ENCODE measurements at regions of chr5 and their contacts with region 1.

Region 1: GRCh38 chr5:154754460-154755360 is 467 bp upstream of the LARP1 start:
- DNase-seq: peak; percentile 100
- H3K4me3 ChIP-seq: peak overlapping the region; percentile 68
- H3K4me3 Mint-ChIP-seq: peak overlapping the region; percentile 85
- H3K27ac Mint-ChIP-seq: peak overlapping the region; percentile 90
- H3K4me1 ChIP-seq: peaks cover 18% of the 10 kb centered on the region
- H3K4me1 Mint-ChIP-seq: peaks cover 22% of the 10 kb centered on the region
- H3K27me3 ChIP-seq: no peaks in the 10 kb centered on the region
- H3K27me3 Mint-ChIP-seq: no peaks in the 10 kb centered on the region
- CTCF ChIP-seq: peak; percentile 42 to 62

Region 2: GRCh38 chr5:154647114-154647760 is 107.5 kb before region 1 on chr5:
- CTCF ChIA-PET with region 1: no interaction called
- POLR2A ChIA-PET with region 1: no interaction called
- intact Hi-C with region 1: loop called (anchors 1 kb)
- DNase-seq: peak; percentile 87 to 92
- H3K4me3 ChIP-seq: peak overlapping the region; percentile 15
- H3K4me3 Mint-ChIP-seq: peak overlapping the region; percentile 67
- H3K27ac Mint-ChIP-seq: peak overlapping the region; percentile 88
- H3K4me1 ChIP-seq: peaks cover 27% of the 10 kb centered on the region
- H3K4me1 Mint-ChIP-seq: peaks cover 17% of the 10 kb centered on the region
- H3K27me3 ChIP-seq: no peaks in the 10 kb centered on the region
- H3K27me3 Mint-ChIP-seq: no peaks in the 10 kb centered on the region
- CTCF ChIP-seq: no peak

Region 3: DNA sequence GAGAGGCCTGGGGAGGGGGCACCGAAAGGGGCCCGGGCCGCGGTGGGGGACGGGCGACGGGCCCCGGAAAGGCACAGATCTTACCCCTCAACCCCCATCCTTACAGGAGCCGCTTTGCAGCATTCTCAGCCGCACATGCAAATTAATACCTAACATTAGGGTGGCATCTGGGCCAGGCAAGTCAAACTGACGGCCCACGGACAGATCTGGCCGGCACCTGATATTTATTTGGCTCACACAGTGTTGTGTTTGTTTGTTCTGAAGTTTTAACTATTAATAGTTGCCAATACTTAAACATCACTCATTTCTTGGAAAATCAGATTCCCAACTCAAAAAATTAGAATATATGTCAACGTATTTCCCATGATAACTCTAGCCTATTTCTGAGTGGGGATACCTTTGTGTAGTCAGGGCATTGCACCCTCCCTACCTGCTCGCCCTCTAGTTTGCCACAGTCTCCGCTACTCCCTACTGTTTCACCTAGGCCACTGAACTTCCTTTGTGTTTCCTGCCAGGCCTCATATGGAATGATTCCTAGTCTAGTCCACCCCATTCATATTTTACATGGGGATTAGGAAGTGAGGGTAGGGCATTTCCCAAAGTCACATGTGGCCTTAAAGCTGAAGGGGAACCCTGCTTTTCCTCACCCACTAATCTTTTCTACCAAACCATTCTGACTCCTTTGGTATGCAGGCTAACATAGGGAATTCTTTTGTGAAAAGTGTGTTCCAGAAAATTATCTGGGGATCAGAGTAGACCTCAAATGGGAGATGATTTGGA is 71.4 kb before region 1 on chr5:
- CTCF ChIA-PET with region 1: no interaction called
- POLR2A ChIA-PET with region 1: no interaction called
- intact Hi-C with region 1: loop called (anchors 1 kb)
- DNase-seq: no peak
- H3K4me3 ChIP-seq: peak overlapping the region; percentile 58
- H3K4me3 Mint-ChIP-seq: peak overlapping the region; percentile 89
- H3K27ac Mint-ChIP-seq: peak overlapping the region; percentile 95
- H3K4me1 ChIP-seq: peaks cover 12% of the 10 kb centered on the region; the same call in 1 of the 2 replicates
- H3K4me1 Mint-ChIP-seq: peaks cover 11% of the 10 kb centered on the region
- H3K27me3 ChIP-seq: no peaks in the 10 kb centered on the region
- H3K27me3 Mint-ChIP-seq: no peaks in the 10 kb centered on the region
- CTCF ChIP-seq: no peak

Region 4: DNA sequence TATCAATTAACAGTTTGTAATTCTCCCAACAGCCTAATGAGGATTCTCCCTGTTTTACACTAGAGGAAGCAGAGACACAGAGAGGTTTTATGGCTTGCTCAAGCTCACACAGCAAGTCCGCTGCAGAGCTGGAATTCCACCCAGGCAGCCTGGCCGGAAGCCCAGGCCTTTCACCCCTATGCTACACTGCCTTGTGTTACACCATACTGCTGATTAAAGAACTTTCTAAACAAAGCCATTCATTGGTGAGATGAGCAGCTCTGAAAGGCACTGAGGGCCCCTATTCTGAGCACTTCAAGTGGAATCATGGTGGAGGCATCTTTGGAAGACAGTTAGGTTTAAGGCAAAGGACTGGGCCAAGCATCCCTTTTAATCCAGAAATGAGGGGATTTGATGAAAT is 14.2 kb before region 1 on chr5:
- CTCF ChIA-PET with region 1: no interaction called
- POLR2A ChIA-PET with region 1: no interaction called
- intact Hi-C with region 1: no loop called
- DNase-seq: no peak
- H3K4me3 ChIP-seq: no peak overlapping the region
- H3K4me3 Mint-ChIP-seq: no peak overlapping the region
- H3K27ac Mint-ChIP-seq: no peak overlapping the region
- H3K4me1 ChIP-seq: peaks cover 5% of the 10 kb centered on the region
- H3K4me1 Mint-ChIP-seq: peaks cover 15% of the 10 kb centered on the region
- H3K27me3 ChIP-seq: no peaks in the 10 kb centered on the region
- H3K27me3 Mint-ChIP-seq: no peaks in the 10 kb centered on the region
- CTCF ChIP-seq: no peak

Region 5: DNA sequence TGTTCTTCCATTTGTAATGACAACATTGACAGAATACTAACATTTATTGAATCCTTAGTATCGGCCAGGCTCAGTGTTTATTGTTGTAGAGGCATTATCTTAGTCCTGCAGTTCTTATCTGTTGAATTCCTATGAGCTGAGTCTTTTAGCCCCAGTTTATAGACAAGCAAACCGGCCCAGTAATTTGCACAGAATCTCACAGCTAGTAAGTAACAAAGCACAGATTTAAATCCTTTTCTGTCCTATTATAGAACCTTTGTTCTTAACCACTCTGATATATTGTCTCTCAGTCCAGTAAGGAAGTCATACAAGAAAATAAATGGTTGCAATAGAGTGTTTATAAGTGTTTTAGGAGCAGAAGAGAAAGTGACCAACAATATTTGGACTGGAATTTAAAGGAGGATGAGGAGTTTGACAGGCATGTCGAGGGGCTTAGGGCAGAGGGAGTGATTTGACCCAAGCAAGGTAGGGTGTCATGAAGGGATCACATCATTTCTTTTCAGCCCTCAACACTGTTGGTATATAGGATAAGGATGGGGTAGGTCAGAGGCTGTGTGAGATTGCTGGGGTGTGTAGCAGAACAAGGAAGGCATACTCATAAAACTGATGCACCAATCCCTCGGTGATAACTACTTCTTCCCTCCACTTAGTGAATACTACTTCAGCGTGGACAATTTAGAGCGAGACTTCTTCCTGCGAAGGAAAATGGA is 40.0 kb after region 1 on chr5:
- CTCF ChIA-PET with region 1: no interaction called
- POLR2A ChIA-PET with region 1: no interaction called
- intact Hi-C with region 1: loop called (anchors 2 kb)
- DNase-seq: peak in 1 of 2 experiments; percentile 52
- H3K4me3 ChIP-seq: no peak overlapping the region
- H3K4me3 Mint-ChIP-seq: peak overlapping the region; percentile 33
- H3K27ac Mint-ChIP-seq: peak overlapping the region; percentile 78
- H3K4me1 ChIP-seq: peaks cover 35% of the 10 kb centered on the region
- H3K4me1 Mint-ChIP-seq: peaks cover 33% of the 10 kb centered on the region
- H3K27me3 ChIP-seq: no peaks in the 10 kb centered on the region
- H3K27me3 Mint-ChIP-seq: no peaks in the 10 kb centered on the region
- CTCF ChIP-seq: no peak

Region 6: GRCh38 chr5:154857530-154858296 is 103.0 kb after region 1 on chr5:
- CTCF ChIA-PET with region 1: no interaction called
- POLR2A ChIA-PET with region 1: no interaction called
- intact Hi-C with region 1: loop called (anchors 1 kb)
- DNase-seq: peak; percentile 93 to 95
- H3K4me3 ChIP-seq: peak overlapping the region; percentile 51
- H3K4me3 Mint-ChIP-seq: peak overlapping the region; percentile 94
- H3K27ac Mint-ChIP-seq: peak overlapping the region; percentile 95
- H3K4me1 ChIP-seq: peaks cover 7% of the 10 kb centered on the region
- H3K4me1 Mint-ChIP-seq: peaks cover 12% of the 10 kb centered on the region
- H3K27me3 ChIP-seq: no peaks in the 10 kb centered on the region
- H3K27me3 Mint-ChIP-seq: no peaks in the 10 kb centered on the region
- CTCF ChIP-seq: peak in 1 of 2 experiments; percentile 29

Region 7: GRCh38 chr5:155546075-155546474 is 791.4 kb after region 1 on chr5:
- CTCF ChIA-PET with region 1: no interaction called
- POLR2A ChIA-PET with region 1: no interaction called
- intact Hi-C with region 1: no loop called
- DNase-seq: no peak
- H3K4me3 ChIP-seq: no peak overlapping the region
- H3K4me3 Mint-ChIP-seq: no peak overlapping the region
- H3K27ac Mint-ChIP-seq: no peak overlapping the region
- H3K4me1 ChIP-seq: no peaks in the 10 kb centered on the region
- H3K4me1 Mint-ChIP-seq: no peaks in the 10 kb centered on the region
- H3K27me3 ChIP-seq: no peaks in the 10 kb centered on the region
- H3K27me3 Mint-ChIP-seq: no peaks in the 10 kb centered on the region
- CTCF ChIP-seq: no peak